Activated CD8-positive, alpha-beta T cell treated with anti-CD3 and anti-CD28 coated beads for 36 hours (primary cell): ENCODE measurements at regions of chr5 and their contacts with region 1.

Region 1: GRCh38 chr5:73215891-73216610 is 43.1 kb downstream of the TMEM174 start:
- DNase-seq: peak; percentile 76
- ATAC-seq: peak; percentile 91
- H3K4me3 Mint-ChIP-seq: peak overlapping the region; percentile 8
- H3K27ac Mint-ChIP-seq: no peak overlapping the region
- H3K4me1 Mint-ChIP-seq: peaks cover 17% of the 10 kb centered on the region
- H3K27me3 Mint-ChIP-seq: peaks cover 72% of the 10 kb centered on the region
- CTCF ChIP-seq: peak; percentile 71

Region 2: GRCh38 chr5:73201547-73202513 is 14.2 kb before region 1 on chr5:
- CTCF ChIA-PET with region 1: interaction called, 34 read pairs
- POLR2A ChIA-PET with region 1: no interaction called
- intact Hi-C with region 1: no loop called
- DNase-seq: peak; percentile 74
- ATAC-seq: peak; percentile 97
- H3K4me3 Mint-ChIP-seq: no peak overlapping the region
- H3K27ac Mint-ChIP-seq: no peak overlapping the region
- H3K4me1 Mint-ChIP-seq: peaks cover 4% of the 10 kb centered on the region
- H3K27me3 Mint-ChIP-seq: peaks cover 58% of the 10 kb centered on the region
- CTCF ChIP-seq: peak; percentile 91

Region 3: DNA sequence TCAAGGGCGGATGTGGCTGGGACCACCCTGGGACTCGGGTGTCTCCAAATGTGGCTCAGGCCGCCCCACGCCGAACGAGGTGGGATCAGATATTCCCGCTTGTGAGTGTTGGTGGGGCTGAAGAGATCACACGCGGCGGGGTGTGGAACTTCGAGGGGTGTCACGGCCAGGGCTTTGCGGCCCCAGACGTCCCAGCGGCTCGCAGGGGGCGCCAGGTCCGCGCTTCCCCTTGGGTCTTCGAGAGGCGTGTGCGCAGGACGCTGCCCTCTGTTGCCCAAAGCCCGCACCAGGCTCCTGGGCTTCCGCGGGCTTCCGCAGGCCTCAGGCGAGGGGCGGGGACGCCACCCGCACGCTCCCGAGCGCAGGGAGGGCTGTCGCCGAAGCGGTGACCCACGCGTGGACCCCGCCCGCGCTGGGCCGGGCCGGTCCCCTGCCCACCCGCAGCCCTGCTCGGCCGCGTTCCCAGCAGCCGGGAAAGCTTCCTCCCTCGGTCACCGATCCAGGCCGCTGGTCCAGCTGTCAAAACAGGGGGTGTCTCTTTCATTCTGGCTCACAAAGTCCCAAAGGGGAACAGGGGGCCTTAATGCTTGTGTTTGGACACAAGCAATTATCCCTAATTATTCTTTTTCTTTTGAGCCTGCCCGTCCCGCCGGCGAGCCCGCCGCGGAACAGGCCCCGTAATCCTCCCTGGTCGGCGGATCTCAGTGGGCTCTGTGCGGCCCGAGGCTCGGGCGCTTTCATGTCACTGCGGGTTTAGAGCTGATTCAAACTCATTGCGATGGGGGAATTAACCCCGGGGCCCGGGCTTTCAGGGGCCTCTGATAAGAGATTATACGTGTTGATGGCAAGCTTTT is 17.5 kb after region 1 on chr5:
- CTCF ChIA-PET with region 1: interaction called, 10 read pairs
- POLR2A ChIA-PET with region 1: no interaction called
- intact Hi-C with region 1: no loop called
- DNase-seq: peak; percentile 36
- ATAC-seq: peak; percentile 45
- H3K4me3 Mint-ChIP-seq: peak overlapping the region; percentile 27
- H3K27ac Mint-ChIP-seq: no peak overlapping the region
- H3K4me1 Mint-ChIP-seq: peaks cover 25% of the 10 kb centered on the region
- H3K27me3 Mint-ChIP-seq: peaks cover 68% of the 10 kb centered on the region
- CTCF ChIP-seq: no peak

Region 4: GRCh38 chr5:73242718-73243117 is 26.7 kb after region 1 on chr5:
- CTCF ChIA-PET with region 1: interaction called, 13 read pairs
- POLR2A ChIA-PET with region 1: no interaction called
- intact Hi-C with region 1: no loop called
- DNase-seq: no peak
- ATAC-seq: no peak
- H3K4me3 Mint-ChIP-seq: no peak overlapping the region
- H3K27ac Mint-ChIP-seq: no peak overlapping the region
- H3K4me1 Mint-ChIP-seq: no peaks in the 10 kb centered on the region
- H3K27me3 Mint-ChIP-seq: peaks cover 25% of the 10 kb centered on the region
- CTCF ChIP-seq: no peak

Region 5: DNA sequence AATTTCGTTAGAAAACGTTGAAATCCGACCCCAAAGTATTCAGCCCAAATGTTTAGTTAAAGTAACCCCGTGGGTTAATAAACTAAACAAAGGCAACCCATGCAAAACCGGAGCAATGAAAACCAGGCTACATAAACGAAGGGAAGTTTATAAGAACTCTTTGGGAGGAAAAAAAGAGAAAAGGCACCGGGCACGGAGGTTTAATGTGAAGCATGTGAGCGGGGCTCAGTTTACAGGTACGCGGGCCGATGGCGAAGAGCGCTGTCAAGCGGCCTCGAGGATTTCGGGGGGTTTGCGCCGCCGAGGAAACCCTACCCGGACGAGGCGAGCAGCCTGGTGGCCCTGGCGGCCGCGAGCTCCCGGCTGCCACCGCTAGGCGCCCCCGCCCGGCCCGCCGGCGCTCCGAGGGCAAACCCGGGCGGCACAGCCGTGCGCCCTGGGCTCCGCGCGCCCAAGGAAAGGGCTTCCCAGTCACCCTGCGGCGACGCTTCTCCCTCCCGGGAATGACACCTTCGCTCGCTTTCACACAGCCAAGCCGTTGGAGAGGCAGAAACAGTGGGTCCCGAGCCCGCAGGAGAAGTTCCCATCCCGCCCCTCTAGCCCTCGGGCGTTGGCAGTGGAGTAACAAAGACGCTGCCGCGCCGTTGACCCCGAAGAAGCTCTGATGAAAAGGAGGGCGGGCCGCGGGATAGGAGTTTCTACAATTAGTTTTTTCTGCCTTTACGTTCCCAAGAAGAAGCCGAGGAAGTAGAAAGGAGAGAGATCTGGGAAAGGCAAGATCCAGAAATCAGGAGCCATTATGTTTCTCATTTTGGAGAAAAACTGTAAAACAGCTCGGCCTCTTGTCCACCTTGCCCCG is 83.0 kb after region 1 on chr5:
- CTCF ChIA-PET with region 1: interaction called, 13 read pairs
- POLR2A ChIA-PET with region 1: no interaction called
- intact Hi-C with region 1: loop called (anchors 5 kb)
- DNase-seq: no peak
- ATAC-seq: peak; percentile 39
- H3K4me3 Mint-ChIP-seq: no peak overlapping the region
- H3K27ac Mint-ChIP-seq: no peak overlapping the region
- H3K4me1 Mint-ChIP-seq: peaks cover 17% of the 10 kb centered on the region
- H3K27me3 Mint-ChIP-seq: peaks cover 81% of the 10 kb centered on the region
- CTCF ChIP-seq: peak; percentile 35

Region 6: GRCh38 chr5:73448463-73449136 is 232.5 kb after region 1 on chr5 and contains the start of gene FOXD1:
- CTCF ChIA-PET with region 1: interaction called, 26 read pairs
- POLR2A ChIA-PET with region 1: no interaction called
- intact Hi-C with region 1: loop called (anchors 5 kb)
- DNase-seq: peak; percentile 81
- ATAC-seq: peak; percentile 81
- H3K4me3 Mint-ChIP-seq: peak within 1 kb of the TSS; percentile 78
- H3K27ac Mint-ChIP-seq: no peak within 1 kb of the TSS
- H3K4me1 Mint-ChIP-seq: peaks cover 15% of the 10 kb centered on the region
- H3K27me3 Mint-ChIP-seq: peaks cover 71% of the 10 kb centered on the region
- CTCF ChIP-seq: no peak
- total RNA-seq, gene FOXD1: 0.99 to 1.5 TPM

Region 7: GRCh38 chr5:73454351-73455036 is 238.4 kb after region 1 on chr5:
- CTCF ChIA-PET with region 1: interaction called, 26 read pairs
- POLR2A ChIA-PET with region 1: no interaction called
- intact Hi-C with region 1: loop called (anchors 5 kb)
- DNase-seq: peak; percentile 51
- ATAC-seq: peak; percentile 86
- H3K4me3 Mint-ChIP-seq: no peak overlapping the region
- H3K27ac Mint-ChIP-seq: no peak overlapping the region
- H3K4me1 Mint-ChIP-seq: peaks cover 4% of the 10 kb centered on the region
- H3K27me3 Mint-ChIP-seq: peaks cover 61% of the 10 kb centered on the region
- CTCF ChIP-seq: peak; percentile 79

Region 8: GRCh38 chr5:73498057-73499008 is 282.3 kb after region 1 on chr5 and contains the start of gene BTF3:
- CTCF ChIA-PET with region 1: no interaction called
- POLR2A ChIA-PET with region 1: no interaction called
- intact Hi-C with region 1: no loop called
- DNase-seq: peak; percentile 96
- ATAC-seq: peak; percentile 95
- H3K4me3 Mint-ChIP-seq: peak within 1 kb of the TSS; percentile 96
- H3K27ac Mint-ChIP-seq: peak within 1 kb of the TSS; percentile 100
- H3K4me1 Mint-ChIP-seq: peaks cover 35% of the 10 kb centered on the region
- H3K27me3 Mint-ChIP-seq: no peaks in the 10 kb centered on the region
- CTCF ChIP-seq: no peak
- total RNA-seq, gene BTF3: 1,122 to 1,184 TPM